WTC11 (cell line): ENCODE measurements at regions of chr1 and their contacts with region 1.

Region 1: DNA sequence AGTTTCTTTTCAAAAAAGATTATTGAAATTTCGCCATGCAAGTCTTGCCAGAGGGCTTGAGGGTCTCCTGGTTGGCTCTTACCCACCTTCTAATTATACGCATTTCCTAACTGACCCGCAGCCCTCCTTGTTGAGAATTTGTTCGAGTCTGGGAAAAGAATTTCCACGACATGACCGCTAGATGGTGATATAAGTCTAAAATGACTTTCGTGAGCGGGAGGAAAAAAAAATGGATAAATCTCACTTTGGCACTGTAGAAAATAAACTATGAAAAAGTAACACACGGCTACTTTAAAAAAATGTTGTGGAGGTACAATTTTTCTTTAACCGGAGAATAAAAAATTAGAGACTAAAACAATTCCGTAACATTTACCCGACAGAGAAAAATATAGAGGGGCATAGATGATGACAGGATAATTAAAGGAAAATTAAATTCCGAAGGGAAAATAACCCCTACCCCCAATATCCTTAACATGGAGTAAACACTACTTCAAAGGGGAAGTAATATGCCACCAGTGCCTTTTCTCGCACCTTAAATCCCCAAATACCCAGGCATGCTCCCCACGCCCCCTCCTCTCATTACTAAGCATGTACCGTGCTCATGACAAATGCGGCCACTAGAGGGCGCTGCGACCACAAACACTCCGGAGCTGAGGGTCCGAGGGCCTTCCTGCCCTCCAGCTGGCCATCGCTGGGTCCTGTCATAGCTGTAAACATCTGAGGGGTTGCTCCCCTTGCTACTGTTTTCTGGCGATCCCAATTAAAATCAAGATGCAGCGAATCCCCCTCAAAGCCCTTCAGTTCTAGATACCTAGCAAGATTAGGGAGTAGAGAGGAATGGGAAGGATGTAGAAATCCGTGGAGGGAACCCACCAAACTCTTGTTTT is 266.9 kb downstream of the ASTN1 start:
- DNase-seq: peak; percentile 92
- ATAC-seq: peak; percentile 97
- H3K4me3 Mint-ChIP-seq: peak overlapping the region; percentile 79
- H3K27ac Mint-ChIP-seq: no peak overlapping the region; the same call in 1 of the 2 replicates
- H3K4me1 Mint-ChIP-seq: peaks cover 14% of the 10 kb centered on the region
- H3K27me3 Mint-ChIP-seq: no peaks in the 10 kb centered on the region
- CTCF ChIP-seq: peak; percentile 96

Region 2: GRCh38 chr1:176939993-176940392 is 42.4 kb after region 1 on chr1:
- CTCF ChIA-PET with region 1: interaction called, 21 read pairs
- POLR2A ChIA-PET with region 1: no interaction called
- DNase-seq: no peak
- ATAC-seq: no peak
- H3K4me3 Mint-ChIP-seq: no peak overlapping the region
- H3K27ac Mint-ChIP-seq: no peak overlapping the region
- H3K4me1 Mint-ChIP-seq: peaks cover 20% of the 10 kb centered on the region
- H3K27me3 Mint-ChIP-seq: no peaks in the 10 kb centered on the region
- CTCF ChIP-seq: no peak

Region 3: GRCh38 chr1:176954242-176954641 is 56.6 kb after region 1 on chr1:
- CTCF ChIA-PET with region 1: interaction called, 74 read pairs
- POLR2A ChIA-PET with region 1: no interaction called
- DNase-seq: no peak
- ATAC-seq: peak; percentile 18; the same call in 1 of the 2 replicates
- H3K4me3 Mint-ChIP-seq: no peak overlapping the region
- H3K27ac Mint-ChIP-seq: no peak overlapping the region
- H3K4me1 Mint-ChIP-seq: peaks cover 63% of the 10 kb centered on the region
- H3K27me3 Mint-ChIP-seq: no peaks in the 10 kb centered on the region; the same call in 1 of the 2 replicates
- CTCF ChIP-seq: peak; percentile 26; the same call in 1 of the 2 replicates

Region 4: GRCh38 chr1:177170756-177171535 is 273.4 kb after region 1 on chr1 and contains the start of gene BRINP2:
- CTCF ChIA-PET with region 1: interaction called, 13 read pairs
- POLR2A ChIA-PET with region 1: interaction called, 6 read pairs
- DNase-seq: peak; percentile 87
- ATAC-seq: peak; percentile 100
- H3K4me3 Mint-ChIP-seq: no peak within 1 kb of the TSS
- H3K27ac Mint-ChIP-seq: no peak within 1 kb of the TSS
- H3K4me1 Mint-ChIP-seq: peaks cover 11% of the 10 kb centered on the region
- H3K27me3 Mint-ChIP-seq: peaks cover 6% of the 10 kb centered on the region
- CTCF ChIP-seq: no peak
- total RNA-seq, gene BRINP2: 0.24 to 0.41 TPM (median 0.34 TPM) in 3 replicates

Region 5: GRCh38 chr1:177256153-177257075 is 358.8 kb after region 1 on chr1:
- CTCF ChIA-PET with region 1: interaction called, 12 read pairs
- POLR2A ChIA-PET with region 1: no interaction called
- DNase-seq: peak; percentile 83
- ATAC-seq: peak; percentile 99
- H3K4me3 Mint-ChIP-seq: no peak overlapping the region
- H3K27ac Mint-ChIP-seq: no peak overlapping the region
- H3K4me1 Mint-ChIP-seq: peaks cover 7% of the 10 kb centered on the region
- H3K27me3 Mint-ChIP-seq: no peaks in the 10 kb centered on the region; the same call in 1 of the 2 replicates
- CTCF ChIP-seq: peak; percentile 60